Panc1 (cell line): ENCODE measurements at regions of chr1 and their contacts with region 1.

Region 1: DNA sequence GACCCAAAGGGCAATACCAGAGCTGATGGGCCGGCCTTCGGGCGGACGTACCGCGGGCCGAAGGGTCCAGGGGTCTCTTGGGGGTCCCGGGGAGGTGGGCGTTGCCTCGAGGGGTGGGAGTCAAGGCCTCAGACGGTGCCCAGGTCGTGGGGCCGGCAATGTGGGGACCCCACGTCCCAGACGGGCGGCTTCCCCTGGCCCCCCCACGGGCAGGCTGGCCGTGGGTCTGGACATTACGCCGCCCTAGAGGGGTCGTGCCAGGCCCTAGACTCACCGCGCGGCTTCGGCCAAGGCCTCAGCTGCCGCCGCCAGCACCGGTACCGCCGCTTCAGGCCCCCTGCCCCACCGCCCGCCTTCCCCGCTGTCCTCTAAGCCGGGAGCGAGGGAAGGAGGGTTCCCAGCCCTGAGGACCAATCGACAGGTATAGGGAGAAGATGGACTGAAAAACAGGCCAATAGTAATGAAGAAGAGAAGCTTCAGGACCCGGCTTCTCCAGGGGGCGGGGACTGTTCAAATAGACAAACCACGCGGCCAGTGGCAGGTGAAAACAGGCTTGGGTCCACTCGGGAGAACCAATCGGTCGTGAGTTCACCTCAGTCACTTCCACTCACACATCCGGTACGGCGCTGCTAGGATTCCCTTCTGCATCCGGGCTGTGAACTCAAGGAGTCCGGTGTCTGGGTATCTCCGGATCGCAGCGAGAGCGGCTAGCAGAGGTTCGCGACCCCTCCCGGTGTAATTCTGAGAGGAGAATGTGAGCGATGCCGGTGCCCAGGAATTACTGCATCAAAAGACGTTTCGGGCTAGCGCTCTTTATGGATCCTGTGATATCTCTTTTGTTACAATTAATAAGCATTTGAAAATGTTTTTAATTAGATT is at the start of gene MTOR:
- DNase-seq: peak; percentile 100
- ATAC-seq: peak; percentile 99
- H3K4me3 ChIP-seq: peak within 1 kb of the TSS; percentile 75 to 88
- H3K27ac ChIP-seq: peak within 1 kb of the TSS; percentile 94
- H3K4me1 ChIP-seq: peaks cover 5% of the 10 kb centered on the region; the same call in 1 of the 2 replicates
- H3K27me3 ChIP-seq: no peaks in the 10 kb centered on the region
- CTCF ChIP-seq: no peak
- total RNA-seq, gene MTOR: 71.2 TPM

Region 2: DNA sequence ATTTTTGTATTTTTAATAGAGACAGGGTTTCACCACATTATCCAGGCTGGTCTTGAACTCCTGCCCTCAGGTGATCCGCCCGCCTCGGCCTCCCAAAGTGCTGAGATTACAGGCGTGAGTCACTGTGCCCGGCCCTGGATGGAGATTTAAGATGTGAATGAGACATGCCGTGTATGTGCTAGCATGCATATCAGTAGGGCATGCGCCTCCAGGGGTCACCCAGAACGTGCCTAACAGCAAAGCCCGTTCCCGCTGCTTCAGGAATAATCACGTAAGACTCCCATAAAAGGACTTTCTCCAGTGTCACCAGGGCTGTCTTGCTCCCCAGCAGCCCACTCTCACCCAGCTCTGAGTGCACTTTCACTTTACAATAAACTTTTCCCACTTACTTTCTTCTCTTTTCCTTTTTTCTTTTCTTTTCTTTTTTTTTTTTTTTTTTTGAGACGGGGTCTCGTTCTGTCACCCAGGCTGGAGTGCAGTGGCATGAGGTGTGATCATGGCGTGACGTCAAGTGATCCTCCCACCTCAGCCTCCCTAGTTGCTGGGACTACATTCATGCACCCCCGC is 169.6 kb after region 1 on chr1:
- CTCF ChIA-PET with region 1: no interaction called
- POLR2A ChIA-PET with region 1: interaction called, 11 read pairs
- in situ Hi-C with region 1: no loop called
- intact Hi-C with region 1: no loop called
- DNase-seq: no peak
- ATAC-seq: no peak
- H3K4me3 ChIP-seq: no peak overlapping the region
- H3K27ac ChIP-seq: no peak overlapping the region
- H3K4me1 ChIP-seq: no peaks in the 10 kb centered on the region
- H3K27me3 ChIP-seq: peaks cover 2% of the 10 kb centered on the region; the same call in 1 of the 2 replicates
- CTCF ChIP-seq: no peak